ENCODE measurements at regions of chr12 and their contacts with region 1.

Region 1: GRCh38 chr12:69359531-69360347 is at the start of gene YEATS4:
- DNase-seq: peak; percentile 75
- H3K4me3 ChIP-seq: peak within 1 kb of the TSS; percentile 82 to 85
- H3K27ac ChIP-seq: peak within 1 kb of the TSS; percentile 95 to 98
- H3K4me1 ChIP-seq: no peaks in the 10 kb centered on the region
- H3K27me3 ChIP-seq: no peaks in the 10 kb centered on the region
- CTCF ChIP-seq: peak in 2 of 4 experiments; percentile 21 to 36
- POLR2A ChIP-seq: peak; percentile 45
- total RNA-seq, gene YEATS4: 29.0 to 57.4 TPM

Region 2: DNA sequence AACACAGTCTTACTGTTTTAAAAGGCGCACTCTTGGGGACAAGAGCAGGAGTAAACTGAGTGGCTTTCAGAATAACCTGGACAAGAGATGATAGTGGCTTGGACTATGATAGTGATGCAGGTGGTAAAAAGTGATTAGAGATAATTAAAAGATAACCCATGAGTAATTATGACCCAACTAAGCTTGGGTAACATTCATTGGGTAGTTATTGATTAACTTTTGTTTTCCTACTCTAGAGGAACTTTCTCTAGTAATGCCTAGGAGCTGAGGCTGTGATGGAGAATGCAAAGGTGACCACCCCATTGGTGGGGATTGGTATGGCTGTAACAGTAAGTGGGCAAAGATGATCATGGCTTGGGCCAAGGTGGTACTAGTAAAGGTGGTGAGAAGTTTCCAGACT is 88.2 kb after region 1 on chr12:
- intact Hi-C with region 1: no loop called
- DNase-seq: no peak
- H3K4me3 ChIP-seq: no peak overlapping the region
- H3K27ac ChIP-seq: no peak overlapping the region
- H3K4me1 ChIP-seq: no peaks in the 10 kb centered on the region
- H3K27me3 ChIP-seq: no peaks in the 10 kb centered on the region
- CTCF ChIP-seq: no peak
- POLR2A ChIP-seq: no peak

Region 3: DNA sequence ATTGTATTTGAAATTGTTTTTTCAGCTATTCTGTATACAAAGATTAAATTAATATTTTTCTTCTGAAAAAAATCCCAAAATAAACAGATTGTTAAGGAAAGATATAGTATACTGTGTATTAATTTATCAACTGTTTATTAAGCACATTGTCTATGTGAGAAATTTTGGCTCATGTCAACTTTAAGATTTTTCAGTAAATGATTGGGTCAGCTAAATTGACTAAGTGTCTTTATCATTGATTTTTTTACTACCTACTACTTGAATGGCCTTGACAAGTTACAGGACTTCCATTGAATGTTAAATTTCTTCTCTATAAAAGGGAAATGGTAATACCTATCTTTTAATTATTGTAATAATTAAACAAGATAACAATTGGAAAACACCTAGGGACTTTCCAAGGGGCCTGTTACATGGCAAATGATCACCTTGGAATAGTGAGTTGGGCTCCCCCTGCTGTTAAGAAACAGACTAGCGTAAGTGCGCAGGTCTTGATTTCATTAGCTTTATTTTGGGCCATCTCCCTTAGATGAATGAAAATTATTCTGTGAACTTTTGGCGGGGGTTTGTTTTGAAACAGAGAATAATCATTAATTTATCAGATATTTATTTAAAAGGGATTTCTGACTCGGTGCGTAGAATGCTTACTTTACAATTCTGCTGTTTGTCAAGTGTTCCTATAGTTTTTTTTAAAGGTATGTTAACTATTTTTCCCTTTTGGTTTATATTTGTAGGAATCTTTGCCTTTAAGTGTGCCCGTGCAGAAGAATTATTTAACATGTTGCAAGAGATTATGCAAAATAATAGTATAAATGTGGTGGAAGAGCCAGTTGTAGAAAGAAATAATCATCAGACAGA is 211.0 kb after region 1 on chr12:
- intact Hi-C with region 1: loop called (anchors 5 kb)
- DNase-seq: peak; percentile 49
- H3K4me3 ChIP-seq: no peak overlapping the region
- H3K27ac ChIP-seq: no peak overlapping the region
- H3K4me1 ChIP-seq: no peaks in the 10 kb centered on the region
- H3K27me3 ChIP-seq: no peaks in the 10 kb centered on the region
- CTCF ChIP-seq: peak; percentile 55 to 75 (median 70)
- POLR2A ChIP-seq: no peak

Region 4: GRCh38 chr12:69585189-69586062 is 225.7 kb after region 1 on chr12 and contains the start of gene CCT2:
- intact Hi-C with region 1: loop called (anchors 5 kb)
- DNase-seq: peak; percentile 97
- H3K4me3 ChIP-seq: peak within 1 kb of the TSS; percentile 89 to 97
- H3K27ac ChIP-seq: peak within 1 kb of the TSS; percentile 81 to 83
- H3K4me1 ChIP-seq: no peaks in the 10 kb centered on the region
- H3K27me3 ChIP-seq: no peaks in the 10 kb centered on the region
- CTCF ChIP-seq: peak in 3 of 4 experiments; percentile 14 to 48 (median 22)
- POLR2A ChIP-seq: peak; percentile 71
- total RNA-seq, gene CCT2: 86.7 to 116 TPM

Region 5: DNA sequence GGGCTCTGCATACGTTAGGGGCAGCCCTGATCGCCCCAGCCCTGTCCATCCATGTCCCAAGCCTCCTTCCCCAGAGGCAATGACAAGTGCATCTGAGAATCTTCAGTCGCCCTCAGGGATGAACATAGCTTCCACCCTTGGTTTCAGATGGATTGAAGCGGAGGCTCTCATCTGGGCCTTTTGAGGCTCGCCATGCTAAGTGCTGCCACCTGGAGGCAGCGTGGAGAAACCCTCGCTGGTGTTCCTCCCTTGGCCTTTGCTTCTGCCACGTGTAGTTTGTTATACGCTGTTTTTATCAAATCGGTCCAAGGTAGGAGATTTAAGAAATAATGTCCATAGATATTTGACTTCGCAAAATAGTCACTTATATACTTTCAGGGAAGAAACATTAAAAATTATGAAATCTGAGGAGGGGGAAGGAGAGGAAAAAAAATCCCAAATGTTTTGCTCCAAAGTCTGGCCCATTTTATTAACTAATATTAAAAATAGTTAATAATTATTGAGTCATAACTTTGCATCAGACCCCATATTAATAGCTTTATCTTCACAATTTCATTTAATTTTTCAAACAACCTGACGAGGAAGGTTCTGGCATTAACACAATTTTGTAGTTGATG is 279.8 kb after region 1 on chr12:
- intact Hi-C with region 1: loop called (anchors 5 kb)
- DNase-seq: peak; percentile 21
- H3K4me3 ChIP-seq: no peak overlapping the region
- H3K27ac ChIP-seq: no peak overlapping the region
- H3K4me1 ChIP-seq: no peaks in the 10 kb centered on the region
- H3K27me3 ChIP-seq: no peaks in the 10 kb centered on the region
- CTCF ChIP-seq: peak; percentile 30 to 72 (median 65)
- POLR2A ChIP-seq: no peak

Region 6: GRCh38 chr12:70040141-70040540 is 680.4 kb after region 1 on chr12:
- intact Hi-C with region 1: no loop called
- DNase-seq: no peak
- H3K4me3 ChIP-seq: no peak overlapping the region
- H3K27ac ChIP-seq: no peak overlapping the region
- H3K4me1 ChIP-seq: no peaks in the 10 kb centered on the region
- H3K27me3 ChIP-seq: no peaks in the 10 kb centered on the region
- CTCF ChIP-seq: no peak
- POLR2A ChIP-seq: no peak

Measured in prostate gland (tissue), 2 donors.